AG04449 (cell line): ENCODE measurements at regions of chr20 and their contacts with region 1.

Region 1: GRCh38 chr20:49846206-49846807 is 33.7 kb downstream of the SLC9A8 start:
- DNase-seq: no peak
- H3K4me3 ChIP-seq: no peak overlapping the region
- CTCF ChIP-seq: peak; percentile 30

Region 2: GRCh38 chr20:49603209-49603627 is 243.1 kb before region 1 on chr20:
- CTCF ChIA-PET with region 1: interaction called, 293 read pairs
- POLR2A ChIA-PET with region 1: interaction called, 3 read pairs
- DNase-seq: no peak
- H3K4me3 ChIP-seq: no peak overlapping the region
- CTCF ChIP-seq: peak; percentile 59

Region 3: DNA sequence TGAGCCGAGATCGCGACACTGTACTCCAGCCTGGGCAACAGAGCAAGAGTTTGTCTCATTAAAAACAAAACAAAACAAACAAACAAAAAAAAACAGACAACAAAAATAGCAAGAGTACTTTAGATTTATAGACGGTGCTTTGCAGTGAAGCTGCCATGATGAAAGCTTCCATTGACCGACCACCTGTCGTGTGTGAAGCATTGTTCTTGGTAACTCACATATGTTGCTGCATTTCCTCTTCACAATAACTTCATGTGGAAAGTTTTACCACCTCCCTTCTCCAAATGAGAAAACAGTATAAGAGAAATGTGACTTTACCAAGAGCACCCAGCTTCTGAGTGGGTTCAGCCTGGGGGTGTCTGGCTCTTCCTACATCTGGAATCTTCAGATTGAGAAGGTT is 222.0 kb before region 1 on chr20:
- CTCF ChIA-PET with region 1: interaction called, 15 read pairs
- POLR2A ChIA-PET with region 1: no interaction called
- DNase-seq: no peak
- H3K4me3 ChIP-seq: no peak overlapping the region
- CTCF ChIP-seq: no peak

Region 4: DNA sequence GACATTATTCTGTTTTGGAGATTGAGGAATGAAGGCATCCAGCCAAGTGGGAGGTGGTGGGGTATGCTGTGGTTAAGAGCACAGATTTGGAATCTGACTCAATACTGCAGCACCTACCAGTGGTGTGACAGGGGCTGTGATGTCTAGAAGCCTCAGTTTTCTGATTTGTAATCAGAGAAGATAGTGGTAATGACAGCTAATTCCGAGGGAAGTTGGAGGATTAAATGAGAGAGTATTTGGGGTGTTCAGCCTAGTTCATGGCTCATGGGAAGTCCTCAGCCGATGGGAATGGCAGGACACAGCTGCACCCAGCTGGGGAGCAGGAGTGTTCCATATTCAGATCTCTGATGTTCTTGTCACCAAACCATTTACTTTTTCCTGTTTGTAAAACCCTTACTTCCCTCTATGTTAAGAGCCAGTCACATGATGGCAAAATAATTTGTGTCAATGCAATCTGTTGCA is 24.4 kb before region 1 on chr20:
- CTCF ChIA-PET with region 1: interaction called, 24 read pairs
- POLR2A ChIA-PET with region 1: no interaction called
- DNase-seq: no peak
- H3K4me3 ChIP-seq: no peak overlapping the region
- CTCF ChIP-seq: peak; percentile 46

Region 5: GRCh38 chr20:49831022-49831769 is 15.1 kb before region 1 on chr20:
- CTCF ChIA-PET with region 1: interaction called, 29 read pairs
- POLR2A ChIA-PET with region 1: no interaction called
- DNase-seq: no peak
- H3K4me3 ChIP-seq: no peak overlapping the region
- CTCF ChIP-seq: no peak

Region 6: GRCh38 chr20:49888345-49888966 is 42.1 kb after region 1 on chr20:
- CTCF ChIA-PET with region 1: interaction called, 14 read pairs
- POLR2A ChIA-PET with region 1: no interaction called
- DNase-seq: no peak
- H3K4me3 ChIP-seq: no peak overlapping the region
- CTCF ChIP-seq: peak; percentile 80

Region 7: GRCh38 chr20:49989234-49990065 is 143.1 kb after region 1 on chr20:
- CTCF ChIA-PET with region 1: no interaction called
- POLR2A ChIA-PET with region 1: no interaction called
- DNase-seq: peak; percentile 34
- H3K4me3 ChIP-seq: no peak overlapping the region; the same call in 1 of the 2 replicates
- CTCF ChIP-seq: no peak

Region 8: DNA sequence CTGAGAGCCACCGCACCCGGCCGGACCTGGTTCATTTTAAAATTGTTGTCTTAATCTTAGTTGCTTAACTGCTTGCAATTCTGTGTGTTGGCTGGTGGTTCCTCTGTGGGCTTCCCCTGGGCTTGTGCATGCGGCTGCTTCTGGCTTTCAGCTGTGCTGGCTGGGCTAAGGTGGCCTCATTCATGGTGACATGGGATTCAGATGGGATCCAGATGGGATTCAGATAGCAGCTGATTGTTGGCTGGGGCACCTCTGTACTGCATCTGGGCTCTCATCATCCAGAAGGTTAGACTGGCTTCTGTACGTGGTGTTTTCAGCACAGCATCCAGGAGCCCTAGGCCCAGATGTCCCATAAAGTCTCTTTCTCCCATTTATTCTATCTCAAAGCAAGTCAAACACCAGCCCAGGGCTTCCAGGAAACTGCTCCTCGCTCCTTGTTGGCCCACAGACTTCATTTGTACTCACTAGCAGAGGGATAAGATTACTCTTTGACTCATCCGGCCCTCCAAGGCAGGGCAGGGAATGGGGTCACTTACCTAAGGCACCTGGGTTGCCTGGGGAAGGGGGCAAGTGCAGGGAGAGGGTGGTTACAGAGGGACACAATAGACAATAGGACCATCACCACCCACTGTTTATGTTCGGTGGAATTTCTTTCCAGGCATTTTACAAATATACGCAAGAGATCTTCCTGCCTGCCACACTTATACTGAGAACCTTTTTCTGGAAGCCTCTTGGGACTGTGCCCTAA is 317.4 kb after region 1 on chr20:
- CTCF ChIA-PET with region 1: no interaction called
- POLR2A ChIA-PET with region 1: no interaction called
- DNase-seq: no peak
- H3K4me3 ChIP-seq: no peak overlapping the region
- CTCF ChIP-seq: no peak

Region 9: GRCh38 chr20:50179507-50180016 is 333.3 kb after region 1 on chr20:
- CTCF ChIA-PET with region 1: no interaction called
- POLR2A ChIA-PET with region 1: no interaction called
- DNase-seq: no peak
- H3K4me3 ChIP-seq: no peak overlapping the region
- CTCF ChIP-seq: no peak